B cell (primary cell): ENCODE measurements at regions of chr12 and their contacts with region 1.

Region 1: GRCh38 chr12:113174461-113175384 is 10.6 kb downstream of the DDX54 start:
- DNase-seq: peak; percentile 83
- ATAC-seq: peak; percentile 77
- H3K4me3 ChIP-seq: no peak overlapping the region
- H3K4me3 Mint-ChIP-seq: no peak overlapping the region
- H3K27ac ChIP-seq: no peak overlapping the region
- H3K27ac Mint-ChIP-seq: peak overlapping the region; percentile 61
- H3K4me1 ChIP-seq: peaks cover 20 to 30% of the 10 kb centered on the region in 2 donors
- H3K4me1 Mint-ChIP-seq: peaks cover 37% of the 10 kb centered on the region
- H3K27me3 ChIP-seq: no peaks in the 10 kb centered on the region
- H3K27me3 Mint-ChIP-seq: no peaks in the 10 kb centered on the region
- CTCF ChIP-seq: peak; percentile 98

Region 2: DNA sequence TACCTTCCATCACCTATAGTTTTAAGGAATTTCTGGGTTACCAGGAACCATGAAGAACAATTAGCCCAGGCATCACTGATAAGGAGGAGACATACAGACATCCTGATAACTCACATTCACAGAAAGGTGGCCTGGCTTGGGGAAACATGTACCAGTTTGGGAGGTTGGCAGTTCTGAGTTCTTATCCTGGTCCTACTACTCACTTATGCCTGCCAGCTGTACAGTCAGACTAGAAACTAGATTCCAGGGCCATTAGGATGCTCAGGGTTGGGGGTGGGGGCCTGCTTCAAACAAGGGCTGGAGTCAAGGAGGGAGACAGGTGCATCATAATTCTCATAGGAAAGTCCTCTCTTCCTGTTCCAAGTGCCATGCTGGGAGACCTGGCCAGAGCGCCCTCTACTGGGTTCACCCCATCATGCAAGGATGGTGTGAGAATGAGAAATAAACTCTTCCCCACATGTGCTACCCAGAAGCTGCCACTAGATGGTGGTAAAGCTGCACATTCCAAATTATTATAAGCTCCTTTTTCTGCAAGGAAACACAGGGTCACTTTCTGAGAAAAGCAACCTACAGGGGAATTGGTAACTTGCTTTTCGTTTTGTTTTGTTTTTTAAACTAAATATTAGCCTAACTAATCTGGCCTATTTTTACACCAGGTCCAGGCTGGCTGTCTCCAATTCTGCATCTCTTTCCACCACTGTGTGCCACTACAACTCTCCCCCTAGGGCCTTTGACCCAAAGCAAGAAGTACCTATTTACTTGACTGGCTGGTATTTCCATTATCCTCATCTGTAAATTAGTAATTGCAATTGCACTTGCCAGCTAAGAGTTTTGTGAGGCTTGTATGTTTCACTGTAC is 182.0 kb before region 1 on chr12:
- CTCF ChIA-PET with region 1: interaction called, 56 read pairs
- POLR2A ChIA-PET with region 1: no interaction called
- intact Hi-C with region 1: loop called (anchors 1 kb)
- DNase-seq: peak; percentile 73
- ATAC-seq: peak; percentile 76
- H3K4me3 ChIP-seq: no peak overlapping the region
- H3K4me3 Mint-ChIP-seq: no peak overlapping the region
- H3K27ac ChIP-seq: peak overlapping the region in 1 of 2 donors; percentile 40
- H3K27ac Mint-ChIP-seq: peak overlapping the region; percentile 53
- H3K4me1 ChIP-seq: peaks cover 8 to 12% of the 10 kb centered on the region in 2 donors
- H3K4me1 Mint-ChIP-seq: peaks cover 24% of the 10 kb centered on the region
- H3K27me3 ChIP-seq: no peaks in the 10 kb centered on the region
- H3K27me3 Mint-ChIP-seq: no peaks in the 10 kb centered on the region
- CTCF ChIP-seq: peak; percentile 90

Region 3: DNA sequence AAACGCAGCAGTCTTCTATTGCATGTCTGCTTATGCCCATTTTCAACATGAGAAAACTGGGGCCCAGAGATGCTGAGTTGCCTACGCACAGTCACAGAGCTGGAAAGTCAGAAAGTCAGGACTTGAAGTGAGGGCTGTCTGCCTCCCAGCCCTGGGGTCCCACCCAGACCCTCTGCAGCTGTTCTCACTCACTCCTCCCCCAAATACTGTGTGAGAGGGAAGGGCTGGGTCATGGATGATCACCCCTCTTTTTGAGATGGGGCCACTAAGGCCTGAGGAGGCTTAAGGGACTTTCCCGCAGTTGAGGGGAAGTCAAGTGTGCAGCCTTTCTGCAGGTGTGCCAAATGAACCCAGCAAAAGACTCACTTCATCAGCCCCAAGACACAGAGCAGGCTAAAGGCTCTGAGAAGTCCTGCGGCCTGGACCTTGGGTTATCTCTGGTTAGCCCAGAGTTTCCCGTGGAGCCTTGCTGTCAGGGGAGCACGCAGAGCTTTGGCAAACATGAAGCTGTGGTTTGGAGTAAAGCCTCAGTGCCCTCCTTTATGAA is 99.5 kb before region 1 on chr12:
- CTCF ChIA-PET with region 1: interaction called, 4 read pairs
- POLR2A ChIA-PET with region 1: interaction called, 7 read pairs
- intact Hi-C with region 1: loop called (anchors 5 kb)
- DNase-seq: peak; percentile 95
- ATAC-seq: peak; percentile 86
- H3K4me3 ChIP-seq: peak overlapping the region in 3 of 5 experiments; percentile 12 to 29 (median 19)
- H3K4me3 Mint-ChIP-seq: peak overlapping the region; percentile 74
- H3K27ac ChIP-seq: peak overlapping the region; percentile 91 to 92
- H3K27ac Mint-ChIP-seq: peak overlapping the region; percentile 91
- H3K4me1 ChIP-seq: peaks cover 95 to 97% of the 10 kb centered on the region in 2 donors
- H3K4me1 Mint-ChIP-seq: peaks cover 89% of the 10 kb centered on the region
- H3K27me3 ChIP-seq: no peaks in the 10 kb centered on the region
- H3K27me3 Mint-ChIP-seq: no peaks in the 10 kb centered on the region
- CTCF ChIP-seq: no peak

Region 4: DNA sequence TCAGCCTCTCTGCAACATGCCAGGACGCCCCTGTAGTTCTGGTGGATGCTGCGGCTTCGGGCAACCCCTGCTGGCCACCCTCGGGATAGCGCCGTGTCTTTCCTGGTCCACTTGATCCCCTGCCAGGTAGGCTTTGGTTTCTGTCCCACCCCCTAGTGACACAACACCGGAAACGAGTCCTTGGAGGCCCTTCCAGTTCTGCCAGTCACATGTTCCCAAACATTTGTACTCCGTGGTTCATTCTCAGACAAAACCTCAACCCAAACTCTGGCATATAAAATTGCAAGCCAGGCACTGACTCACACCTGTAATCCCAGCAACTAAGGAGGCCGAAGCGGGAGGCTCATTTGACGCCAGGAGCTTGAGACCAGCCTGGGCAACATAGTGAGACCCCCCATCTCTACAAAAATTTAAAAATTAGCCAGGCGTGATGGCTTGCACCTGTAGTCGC is 76.3 kb before region 1 on chr12:
- CTCF ChIA-PET with region 1: interaction called, 58 read pairs
- POLR2A ChIA-PET with region 1: no interaction called
- intact Hi-C with region 1: loop called (anchors 2 kb)
- DNase-seq: peak; percentile 82
- ATAC-seq: peak; percentile 87
- H3K4me3 ChIP-seq: no peak overlapping the region
- H3K4me3 Mint-ChIP-seq: no peak overlapping the region
- H3K27ac ChIP-seq: peak overlapping the region in 1 of 2 donors; percentile 15
- H3K27ac Mint-ChIP-seq: peak overlapping the region; percentile 73
- H3K4me1 ChIP-seq: peaks cover 9 to 20% of the 10 kb centered on the region in 2 donors
- H3K4me1 Mint-ChIP-seq: peaks cover 18% of the 10 kb centered on the region
- H3K27me3 ChIP-seq: peaks cover 0 to under 1% (median 0%) of the 10 kb centered on the region in 4 experiments
- H3K27me3 Mint-ChIP-seq: no peaks in the 10 kb centered on the region
- CTCF ChIP-seq: peak; percentile 95

Region 5: GRCh38 chr12:113135178-113136127 is 39.3 kb before region 1 on chr12 and contains the start of gene RASAL1:
- CTCF ChIA-PET with region 1: interaction called, 12 read pairs
- POLR2A ChIA-PET with region 1: no interaction called
- intact Hi-C with region 1: loop called (anchors 2 kb)
- DNase-seq: peak; percentile 74
- ATAC-seq: peak; percentile 80
- H3K4me3 ChIP-seq: peak within 1 kb of the TSS in 4 of 5 experiments; percentile 24 to 46 (median 32)
- H3K4me3 Mint-ChIP-seq: peak within 1 kb of the TSS; percentile 84
- H3K27ac ChIP-seq: no peak within 1 kb of the TSS
- H3K27ac Mint-ChIP-seq: peak within 1 kb of the TSS; percentile 85
- H3K4me1 ChIP-seq: peaks cover 16 to 25% of the 10 kb centered on the region in 2 donors
- H3K4me1 Mint-ChIP-seq: peaks cover 26% of the 10 kb centered on the region
- H3K27me3 ChIP-seq: peaks cover 0 to 21% (median 6%) of the 10 kb centered on the region in 4 experiments
- H3K27me3 Mint-ChIP-seq: peaks cover 6% of the 10 kb centered on the region
- CTCF ChIP-seq: peak; percentile 70
- total RNA-seq, gene RASAL1: 11.0 and 13.9 TPM in 2 replicates

Region 6: DNA sequence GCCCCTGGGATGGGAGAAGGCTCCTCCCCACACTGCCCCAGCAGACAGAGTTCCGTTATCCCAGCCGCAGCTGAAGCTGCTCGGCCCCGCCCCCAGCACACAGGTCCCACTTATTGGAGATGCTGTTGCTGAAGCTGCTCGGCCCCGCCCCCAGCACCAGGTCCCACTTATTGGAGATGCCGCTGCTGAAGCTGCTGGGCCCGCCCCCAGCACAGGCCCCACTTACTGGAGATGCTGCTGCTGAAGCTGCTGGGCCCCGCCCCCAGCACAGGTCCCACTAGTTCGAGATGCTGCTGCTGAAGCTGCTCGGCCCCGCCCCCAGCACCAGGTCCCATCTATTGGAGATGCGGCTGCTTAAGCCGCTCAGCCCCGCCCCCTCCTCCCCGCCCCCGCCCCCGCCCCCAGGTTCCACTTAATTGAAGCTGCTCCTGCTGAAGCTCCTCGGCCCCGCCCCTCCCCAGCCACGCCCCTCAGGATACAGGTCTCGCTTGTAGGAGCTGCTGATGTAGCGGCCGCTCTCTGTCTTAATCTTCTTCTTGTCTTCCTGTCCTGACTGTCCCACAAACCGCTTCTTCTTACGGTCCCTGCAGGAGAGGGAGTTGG is 13.2 kb before region 1 on chr12:
- CTCF ChIA-PET with region 1: interaction called, 73 read pairs
- POLR2A ChIA-PET with region 1: interaction called, 3 read pairs
- intact Hi-C with region 1: no loop called
- DNase-seq: peak; percentile 45
- ATAC-seq: peak; percentile 73
- H3K4me3 ChIP-seq: no peak overlapping the region
- H3K4me3 Mint-ChIP-seq: no peak overlapping the region
- H3K27ac ChIP-seq: no peak overlapping the region
- H3K27ac Mint-ChIP-seq: no peak overlapping the region
- H3K4me1 ChIP-seq: no peaks in the 10 kb centered on the region
- H3K4me1 Mint-ChIP-seq: peaks cover 4% of the 10 kb centered on the region
- H3K27me3 ChIP-seq: no peaks in the 10 kb centered on the region
- H3K27me3 Mint-ChIP-seq: no peaks in the 10 kb centered on the region
- CTCF ChIP-seq: no peak

Region 7: DNA sequence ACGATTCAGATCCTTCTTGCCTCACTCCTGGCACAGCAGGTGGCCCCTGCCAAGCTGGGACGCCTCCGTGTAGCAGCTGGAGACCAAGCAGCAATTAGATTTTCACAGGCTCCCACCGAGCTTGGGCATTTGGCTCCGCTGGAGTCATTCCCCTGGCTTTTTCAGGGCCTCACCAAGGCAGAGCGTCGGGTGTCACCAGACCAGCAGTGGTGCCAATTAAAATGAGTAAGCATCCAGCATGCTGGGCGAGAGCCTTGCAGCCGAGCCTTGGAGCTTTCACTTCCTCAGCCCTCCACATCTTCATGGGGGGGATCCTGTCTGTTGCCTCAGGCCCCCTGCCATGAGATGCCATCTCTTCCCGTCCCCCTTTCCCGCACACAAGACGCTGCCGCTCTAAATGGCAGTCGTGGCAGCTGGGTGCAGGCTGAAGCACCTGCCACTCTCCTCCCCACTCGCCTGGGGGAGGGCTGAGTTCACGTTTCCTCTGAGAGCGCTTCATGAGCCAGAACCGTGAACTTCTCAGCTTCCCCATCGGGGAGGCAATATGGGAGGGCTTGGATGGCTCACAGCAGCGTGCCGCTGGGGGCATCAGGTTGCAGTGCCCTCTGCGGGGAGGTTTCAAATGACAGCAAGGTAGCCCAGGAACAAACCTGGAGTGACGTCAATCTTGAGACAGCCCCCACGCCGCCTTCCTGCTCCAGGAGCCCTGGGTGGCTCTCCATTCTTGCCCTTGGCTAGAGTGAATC is 58.3 kb after region 1 on chr12:
- CTCF ChIA-PET with region 1: interaction called, 14 read pairs
- POLR2A ChIA-PET with region 1: no interaction called
- intact Hi-C with region 1: no loop called
- DNase-seq: peak; percentile 94
- ATAC-seq: peak; percentile 83
- H3K4me3 ChIP-seq: peak overlapping the region in 4 of 5 experiments; percentile 7 to 31 (median 17)
- H3K4me3 Mint-ChIP-seq: peak overlapping the region; percentile 82
- H3K27ac ChIP-seq: peak overlapping the region; percentile 54 to 73
- H3K27ac Mint-ChIP-seq: peak overlapping the region; percentile 87
- H3K4me1 ChIP-seq: peaks cover 67 to 76% of the 10 kb centered on the region in 2 donors
- H3K4me1 Mint-ChIP-seq: peaks cover 78% of the 10 kb centered on the region
- H3K27me3 ChIP-seq: no peaks in the 10 kb centered on the region
- H3K27me3 Mint-ChIP-seq: no peaks in the 10 kb centered on the region
- CTCF ChIP-seq: peak; percentile 74